ENCODE measurements at regions of chr3 and their contacts with region 1.

Region 1: GRCh38 chr3:150035301-150035779 is 64.6 kb upstream of the PFN2 start:
- DNase-seq: peak in 1 of 2 donors; percentile 63
- ATAC-seq: peak; percentile 74 to 85 (median 78)
- H3K4me3 ChIP-seq: peak overlapping the region; percentile 23
- H3K27ac ChIP-seq: peak overlapping the region; percentile 87
- H3K4me1 ChIP-seq: peaks cover 14% of the 10 kb centered on the region
- H3K27me3 ChIP-seq: no peaks in the 10 kb centered on the region
- CTCF ChIP-seq: no peak

Region 2: GRCh38 chr3:149975919-149976318 is 59.4 kb before region 1 on chr3:
- intact Hi-C with region 1: loop called (anchors 1 to 5 kb)
- DNase-seq: no peak
- ATAC-seq: no peak
- H3K4me3 ChIP-seq: no peak overlapping the region
- H3K27ac ChIP-seq: peak overlapping the region; percentile 50
- H3K4me1 ChIP-seq: peaks cover 16% of the 10 kb centered on the region
- H3K27me3 ChIP-seq: no peaks in the 10 kb centered on the region
- CTCF ChIP-seq: no peak

Region 3: DNA sequence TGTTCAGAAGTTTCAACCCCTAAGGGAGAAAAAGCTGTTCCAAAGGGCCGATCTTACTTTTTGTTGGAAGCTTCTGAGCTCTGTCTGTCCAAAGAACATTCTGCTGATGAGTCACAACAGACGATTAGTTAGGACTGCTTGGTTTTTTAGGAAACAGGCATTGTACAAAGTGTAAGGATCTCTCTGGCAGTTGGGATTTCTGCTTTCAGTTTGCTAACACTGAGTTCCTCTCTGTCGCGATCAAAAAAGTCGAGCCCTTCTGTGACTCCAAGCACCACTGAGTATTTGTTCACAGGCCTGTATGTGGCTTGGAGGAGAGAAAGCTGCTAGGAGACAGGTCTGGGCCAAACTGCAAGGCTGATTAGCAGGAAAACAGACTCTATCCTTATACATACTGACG is 27.2 kb after region 1 on chr3:
- intact Hi-C with region 1: loop called in 1 of 2 experiments (anchors 1 kb)
- DNase-seq: no peak
- ATAC-seq: peak; percentile 41 to 66 (median 45)
- H3K4me3 ChIP-seq: peak overlapping the region; percentile 31
- H3K27ac ChIP-seq: peak overlapping the region; percentile 95
- H3K4me1 ChIP-seq: peaks cover 61% of the 10 kb centered on the region
- H3K27me3 ChIP-seq: no peaks in the 10 kb centered on the region
- CTCF ChIP-seq: no peak

Region 4: DNA sequence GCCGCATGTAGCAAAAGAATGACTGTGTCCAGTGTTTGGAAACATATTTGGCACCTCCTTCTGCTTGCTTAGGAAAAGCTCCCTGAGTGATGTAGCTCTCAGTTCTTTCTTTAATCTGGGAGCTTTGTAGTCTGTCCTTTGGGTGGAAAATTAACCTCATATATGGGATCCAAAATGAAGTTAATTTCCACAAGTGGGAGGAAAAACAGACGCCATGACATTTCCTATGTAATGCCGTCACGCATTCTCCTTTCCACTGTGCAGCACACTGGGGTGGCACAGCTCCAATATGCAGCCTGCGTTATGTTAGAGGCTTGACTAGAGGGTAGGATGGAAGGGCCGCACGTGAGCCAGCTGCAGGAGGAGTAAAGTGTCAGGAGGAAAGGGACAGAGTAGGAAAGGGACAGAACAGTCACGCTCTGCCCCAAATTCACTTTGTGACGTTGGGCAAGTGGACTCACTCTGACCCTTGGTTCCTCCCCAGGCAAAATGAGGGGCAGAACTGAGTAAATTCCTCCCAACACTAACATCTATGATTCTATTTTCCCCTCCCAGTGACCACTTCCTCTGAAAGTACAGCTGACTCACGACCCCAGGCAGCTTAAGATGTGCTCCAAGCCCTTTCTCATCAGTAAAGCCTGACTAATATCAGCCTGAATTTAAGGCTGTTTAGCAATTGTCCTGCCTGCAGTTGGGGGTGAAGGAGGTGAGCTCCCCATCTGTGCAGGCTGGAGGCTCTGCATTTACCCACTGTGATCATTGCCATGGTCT is 111.8 kb after region 1 on chr3:
- intact Hi-C with region 1: loop called in 1 of 2 experiments (anchors 2 kb)
- DNase-seq: peak; percentile 67 to 81
- ATAC-seq: peak; percentile 55 to 72 (median 69)
- H3K4me3 ChIP-seq: peak overlapping the region; percentile 17
- H3K27ac ChIP-seq: peak overlapping the region; percentile 96
- H3K4me1 ChIP-seq: peaks cover 57% of the 10 kb centered on the region
- H3K27me3 ChIP-seq: no peaks in the 10 kb centered on the region
- CTCF ChIP-seq: no peak

Region 5: GRCh38 chr3:150183678-150184425 is 148.5 kb after region 1 on chr3:
- intact Hi-C with region 1: loop called in 1 of 2 experiments (anchors 5 kb)
- DNase-seq: peak; percentile 71 to 82
- ATAC-seq: peak; percentile 97 to 99 (median 98)
- H3K4me3 ChIP-seq: peak overlapping the region; percentile 58
- H3K27ac ChIP-seq: peak overlapping the region; percentile 81
- H3K4me1 ChIP-seq: no peaks in the 10 kb centered on the region
- H3K27me3 ChIP-seq: no peaks in the 10 kb centered on the region
- CTCF ChIP-seq: peak; percentile 63

Region 6: GRCh38 chr3:150408221-150409102 is 373.1 kb after region 1 on chr3 and contains the start of gene TSC22D2:
- intact Hi-C with region 1: no loop called
- DNase-seq: peak; percentile 97 to 98
- ATAC-seq: peak; percentile 74 to 82 (median 78)
- H3K4me3 ChIP-seq: peak within 1 kb of the TSS; percentile 88
- H3K27ac ChIP-seq: peak within 1 kb of the TSS; percentile 99
- H3K4me1 ChIP-seq: peaks cover 16% of the 10 kb centered on the region
- H3K27me3 ChIP-seq: no peaks in the 10 kb centered on the region
- CTCF ChIP-seq: peak; percentile 14
- total RNA-seq, gene TSC22D2: 29.7 to 63.6 (median 36.2) TPM